ENCODE measurements at regions of chr17 and their contacts with region 1.

Region 1: DNA sequence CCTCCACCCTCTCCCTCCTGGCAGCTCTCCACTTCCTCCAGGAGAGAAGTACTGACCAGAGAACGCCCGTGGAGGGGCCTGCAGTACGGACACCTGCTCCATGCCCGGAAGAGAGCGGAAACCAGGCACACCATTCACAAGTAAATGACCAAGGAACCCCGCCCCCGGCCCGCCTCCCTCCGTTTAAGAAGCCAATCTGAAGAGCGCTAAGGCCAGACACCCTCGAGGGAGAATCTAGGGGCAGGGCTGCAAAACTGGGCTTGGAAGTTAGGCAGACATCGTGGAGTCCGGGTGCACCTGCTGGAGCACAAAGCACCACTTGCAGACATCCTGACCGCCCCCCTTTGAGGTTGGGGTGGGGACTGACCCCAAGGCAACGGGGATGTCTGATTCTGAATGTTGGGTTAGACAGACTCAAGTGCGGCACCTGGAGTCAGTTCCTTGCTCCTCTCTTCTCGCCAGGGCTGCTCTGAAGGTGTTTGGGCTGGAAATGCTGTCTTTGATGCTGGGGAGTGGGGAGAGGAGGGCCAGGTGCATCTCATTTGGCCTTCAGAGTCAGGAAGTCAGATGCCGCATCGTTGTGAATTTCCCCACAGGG is 964 bp upstream of the FAAP100 start:
- DNase-seq: peak; percentile 92
- ATAC-seq: peak; percentile 64
- H3K4me3 ChIP-seq: peak overlapping the region; percentile 63 to 97 (median 91)
- H3K4me3 Mint-ChIP-seq: peak overlapping the region; percentile 92
- H3K27ac ChIP-seq: peak overlapping the region; percentile 66 to 86
- H3K27ac Mint-ChIP-seq: peak overlapping the region; percentile 93
- H3K4me1 ChIP-seq: peaks cover 18 to 23% of the 10 kb centered on the region in 2 donors
- H3K4me1 Mint-ChIP-seq: peaks cover 31% of the 10 kb centered on the region
- H3K27me3 ChIP-seq: no peaks in the 10 kb centered on the region
- H3K27me3 Mint-ChIP-seq: no peaks in the 10 kb centered on the region
- CTCF ChIP-seq: no peak

Region 2: GRCh38 chr17:81253358-81254131 is 299.6 kb before region 1 on chr17:
- CTCF ChIA-PET with region 1: interaction called, 3 read pairs
- POLR2A ChIA-PET with region 1: no interaction called
- intact Hi-C with region 1: loop called (anchors 5 kb)
- DNase-seq: peak; percentile 77
- ATAC-seq: peak; percentile 83
- H3K4me3 ChIP-seq: no peak overlapping the region
- H3K4me3 Mint-ChIP-seq: no peak overlapping the region
- H3K27ac ChIP-seq: no peak overlapping the region
- H3K27ac Mint-ChIP-seq: peak overlapping the region; percentile 17
- H3K4me1 ChIP-seq: peaks cover 0 to 11% of the 10 kb centered on the region in 2 donors
- H3K4me1 Mint-ChIP-seq: peaks cover 7% of the 10 kb centered on the region
- H3K27me3 ChIP-seq: no peaks in the 10 kb centered on the region
- H3K27me3 Mint-ChIP-seq: no peaks in the 10 kb centered on the region
- CTCF ChIP-seq: peak; percentile 83

Region 3: GRCh38 chr17:81429786-81430551 is 123.1 kb before region 1 on chr17:
- CTCF ChIA-PET with region 1: no interaction called
- POLR2A ChIA-PET with region 1: no interaction called
- intact Hi-C with region 1: no loop called
- DNase-seq: peak; percentile 29
- ATAC-seq: no peak
- H3K4me3 ChIP-seq: no peak overlapping the region
- H3K4me3 Mint-ChIP-seq: no peak overlapping the region
- H3K27ac ChIP-seq: no peak overlapping the region
- H3K27ac Mint-ChIP-seq: no peak overlapping the region
- H3K4me1 ChIP-seq: peaks cover 39% of the 10 kb centered on the region in 2 donors
- H3K4me1 Mint-ChIP-seq: peaks cover 18% of the 10 kb centered on the region
- H3K27me3 ChIP-seq: peaks cover 0 to 56% (median 15%) of the 10 kb centered on the region in 4 experiments
- H3K27me3 Mint-ChIP-seq: peaks cover 9% of the 10 kb centered on the region
- CTCF ChIP-seq: no peak

Region 4: DNA sequence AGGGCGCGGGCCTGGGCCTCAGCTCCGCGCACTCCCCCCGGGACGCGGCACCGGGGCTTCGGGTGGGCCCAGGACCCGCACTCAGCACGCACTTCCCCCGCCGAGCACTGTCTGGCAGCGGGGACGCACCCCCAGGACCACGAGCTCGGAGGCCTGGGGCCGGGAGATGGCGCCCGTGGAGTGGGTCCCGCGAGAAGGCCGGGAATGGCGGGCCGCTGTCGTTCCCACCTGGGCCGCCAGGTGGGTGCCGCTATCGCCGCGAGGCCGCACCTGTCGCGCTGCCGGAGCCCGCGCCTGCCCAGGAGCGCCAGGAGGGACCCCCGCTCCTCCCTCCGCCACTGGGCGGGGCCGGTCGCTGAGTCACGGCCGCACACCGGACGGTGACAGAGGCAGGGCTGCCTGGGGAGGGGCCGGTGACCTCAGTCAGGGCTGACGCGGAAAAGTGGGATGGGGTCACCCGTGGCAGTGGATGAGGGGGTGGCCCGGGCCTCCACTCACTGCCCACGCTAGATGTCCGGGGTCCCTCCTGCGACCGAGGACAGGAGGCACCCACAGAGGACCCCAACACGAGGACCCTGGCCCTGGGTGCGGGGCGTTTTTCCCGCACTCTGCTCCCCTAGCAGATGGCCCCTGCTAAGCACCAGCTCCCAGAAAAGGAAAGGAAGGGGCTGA is 33.7 kb before region 1 on chr17:
- CTCF ChIA-PET with region 1: interaction called, 25 read pairs
- POLR2A ChIA-PET with region 1: interaction called, 33 read pairs
- intact Hi-C with region 1: loop called (anchors 1 kb)
- DNase-seq: peak; percentile 88
- ATAC-seq: peak; percentile 14
- H3K4me3 ChIP-seq: peak overlapping the region in 4 of 5 experiments; percentile 47 to 94 (median 64)
- H3K4me3 Mint-ChIP-seq: peak overlapping the region; percentile 98
- H3K27ac ChIP-seq: peak overlapping the region; percentile 97 to 98
- H3K27ac Mint-ChIP-seq: peak overlapping the region; percentile 86
- H3K4me1 ChIP-seq: peaks cover 37 to 55% of the 10 kb centered on the region in 2 donors
- H3K4me1 Mint-ChIP-seq: peaks cover 42% of the 10 kb centered on the region
- H3K27me3 ChIP-seq: no peaks in the 10 kb centered on the region
- H3K27me3 Mint-ChIP-seq: no peaks in the 10 kb centered on the region
- CTCF ChIP-seq: peak; percentile 87

Region 5: DNA sequence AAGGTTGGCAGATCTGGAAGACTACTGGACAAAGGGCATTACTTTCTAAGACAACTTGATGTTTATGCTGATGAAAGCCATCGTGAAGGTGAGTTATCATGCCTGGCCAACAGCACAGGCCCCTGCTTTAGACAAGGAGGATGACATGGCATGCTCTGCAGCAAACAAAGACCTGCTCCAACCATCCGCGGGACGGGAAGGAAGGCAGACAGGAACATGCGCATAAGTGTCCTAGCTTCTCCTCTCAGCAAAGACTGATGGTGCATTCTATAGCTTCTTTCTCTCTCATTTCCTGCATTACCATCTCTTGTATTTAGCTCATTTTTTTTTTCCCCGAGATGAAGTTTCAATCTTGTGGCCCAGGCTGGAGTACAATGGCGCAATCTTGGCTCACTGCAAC is 78.4 kb after region 1 on chr17:
- CTCF ChIA-PET with region 1: no interaction called
- POLR2A ChIA-PET with region 1: no interaction called
- intact Hi-C with region 1: no loop called
- DNase-seq: no peak
- ATAC-seq: no peak
- H3K4me3 ChIP-seq: no peak overlapping the region
- H3K4me3 Mint-ChIP-seq: no peak overlapping the region
- H3K27ac ChIP-seq: no peak overlapping the region
- H3K27ac Mint-ChIP-seq: no peak overlapping the region
- H3K4me1 ChIP-seq: peaks cover 11 to 21% of the 10 kb centered on the region in 2 donors
- H3K4me1 Mint-ChIP-seq: peaks cover 20% of the 10 kb centered on the region
- H3K27me3 ChIP-seq: no peaks in the 10 kb centered on the region
- H3K27me3 Mint-ChIP-seq: no peaks in the 10 kb centered on the region
- CTCF ChIP-seq: no peak

Region 6: DNA sequence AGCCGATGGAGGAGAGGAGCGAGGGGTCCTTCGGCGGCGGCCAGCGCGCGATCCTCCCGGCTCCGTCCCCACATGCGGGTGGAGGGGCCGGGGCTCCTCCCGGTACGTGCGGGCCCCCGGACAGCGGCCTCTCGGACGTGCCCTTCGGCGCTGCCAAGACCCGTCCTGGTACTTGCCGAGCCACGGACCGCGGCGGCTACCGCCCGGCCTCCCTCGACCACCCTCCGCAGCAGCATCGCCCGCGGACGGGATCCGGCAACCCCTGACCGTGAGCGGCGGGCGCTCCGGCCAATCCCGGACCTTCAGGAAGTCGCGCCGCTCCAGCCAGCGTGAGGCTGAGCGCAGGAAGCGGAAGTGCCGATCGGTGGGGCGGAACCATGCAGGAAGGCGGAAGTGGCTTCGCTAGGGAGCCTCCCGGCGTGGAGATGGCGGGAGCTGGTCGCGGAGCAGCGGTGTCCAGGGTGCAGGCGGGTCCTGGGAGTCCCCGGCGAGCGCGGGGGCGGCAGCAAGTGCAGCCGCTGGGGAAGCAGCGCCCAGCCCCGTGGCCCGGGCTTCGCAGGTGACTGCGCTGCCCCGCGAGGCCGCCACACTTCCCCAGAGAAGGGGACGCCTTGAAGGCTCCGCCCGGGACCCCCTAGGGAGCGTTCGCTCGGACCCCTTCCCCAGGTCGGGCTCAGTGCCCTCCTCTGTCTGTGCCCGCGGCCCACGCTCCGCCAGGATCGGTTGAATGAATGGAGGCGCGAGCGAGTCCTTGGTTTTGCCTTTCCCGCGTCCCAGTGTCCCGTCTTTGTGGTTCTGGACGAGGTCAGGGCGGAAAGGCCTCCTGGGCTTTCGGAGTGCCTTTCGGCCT is 113.5 kb after region 1 on chr17 and contains the starts of genes CCDC137 and OXLD1:
- CTCF ChIA-PET with region 1: no interaction called
- POLR2A ChIA-PET with region 1: no interaction called
- intact Hi-C with region 1: loop called (anchors 2 kb)
- DNase-seq: peak; percentile 94
- ATAC-seq: peak; percentile 97
- H3K4me3 ChIP-seq: peak within 1 kb of the TSS; percentile 77 to 98 (median 93)
- H3K4me3 Mint-ChIP-seq: peak within 1 kb of the TSS; percentile 91
- H3K27ac ChIP-seq: peak within 1 kb of the TSS; percentile 69 to 80
- H3K27ac Mint-ChIP-seq: peak within 1 kb of the TSS; percentile 96
- H3K4me1 ChIP-seq: peaks cover 19 to 25% of the 10 kb centered on the region in 2 donors
- H3K4me1 Mint-ChIP-seq: peaks cover 23% of the 10 kb centered on the region
- H3K27me3 ChIP-seq: no peaks in the 10 kb centered on the region
- H3K27me3 Mint-ChIP-seq: no peaks in the 10 kb centered on the region
- CTCF ChIP-seq: no peak
- total RNA-seq, gene CCDC137: 36.0 and 41.7 TPM in 2 replicates
- total RNA-seq, gene OXLD1: 38.6 and 39.5 TPM in 2 replicates